ENCODE measurements at regions of chr7 and their contacts with region 1.

Region 1: DNA sequence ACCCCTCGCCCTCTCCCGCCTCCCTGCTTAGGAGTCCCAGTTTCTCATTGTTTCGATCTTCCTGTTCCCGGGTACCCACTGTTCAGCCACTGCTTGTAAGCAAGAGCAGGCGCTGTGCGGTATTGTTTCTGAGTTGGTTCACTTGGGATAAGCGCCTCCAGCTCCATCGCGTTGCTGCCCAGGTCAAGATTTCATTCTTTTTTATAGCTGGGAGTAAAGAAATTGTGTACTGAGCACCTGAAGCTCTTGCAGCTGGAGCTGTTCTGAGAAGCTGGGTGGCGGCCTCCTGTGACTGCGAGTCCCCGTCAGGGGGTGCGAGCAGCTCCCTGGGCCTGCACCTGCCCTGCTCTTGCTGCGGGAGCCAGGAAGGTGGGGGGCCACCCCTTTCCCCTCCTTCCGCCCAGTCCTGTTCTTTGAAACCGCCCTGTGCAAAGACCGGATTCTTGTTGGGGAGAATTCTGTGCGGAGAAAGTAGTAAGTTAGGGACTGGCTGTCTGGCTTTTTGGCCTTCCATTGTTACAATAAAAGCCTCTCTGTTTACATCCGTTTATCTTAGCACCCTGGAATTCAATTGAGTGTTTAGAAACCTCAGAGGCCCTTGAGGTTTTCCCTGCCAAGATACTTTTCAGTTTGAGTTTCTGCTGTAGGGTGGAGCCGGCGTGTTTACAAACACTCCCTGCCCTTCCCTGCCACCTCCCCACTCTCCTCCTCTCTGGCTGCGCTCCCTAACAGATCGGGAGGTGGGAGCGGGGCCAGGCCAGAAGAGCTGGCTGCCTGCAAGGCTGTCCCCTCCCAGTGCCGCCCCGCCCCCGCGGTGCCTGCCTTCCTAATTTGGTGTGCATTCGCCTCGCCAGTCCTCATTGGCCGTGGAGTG is 30.8 kb upstream of the AP5Z1 start:
- DNase-seq: peak; percentile 99
- H3K4me3 Mint-ChIP-seq: peak overlapping the region; percentile 73
- H3K27ac Mint-ChIP-seq: peak overlapping the region; percentile 97
- H3K4me1 Mint-ChIP-seq: peaks cover 4% of the 10 kb centered on the region
- H3K27me3 Mint-ChIP-seq: no peaks in the 10 kb centered on the region
- CTCF ChIP-seq: no peak

Region 2: DNA sequence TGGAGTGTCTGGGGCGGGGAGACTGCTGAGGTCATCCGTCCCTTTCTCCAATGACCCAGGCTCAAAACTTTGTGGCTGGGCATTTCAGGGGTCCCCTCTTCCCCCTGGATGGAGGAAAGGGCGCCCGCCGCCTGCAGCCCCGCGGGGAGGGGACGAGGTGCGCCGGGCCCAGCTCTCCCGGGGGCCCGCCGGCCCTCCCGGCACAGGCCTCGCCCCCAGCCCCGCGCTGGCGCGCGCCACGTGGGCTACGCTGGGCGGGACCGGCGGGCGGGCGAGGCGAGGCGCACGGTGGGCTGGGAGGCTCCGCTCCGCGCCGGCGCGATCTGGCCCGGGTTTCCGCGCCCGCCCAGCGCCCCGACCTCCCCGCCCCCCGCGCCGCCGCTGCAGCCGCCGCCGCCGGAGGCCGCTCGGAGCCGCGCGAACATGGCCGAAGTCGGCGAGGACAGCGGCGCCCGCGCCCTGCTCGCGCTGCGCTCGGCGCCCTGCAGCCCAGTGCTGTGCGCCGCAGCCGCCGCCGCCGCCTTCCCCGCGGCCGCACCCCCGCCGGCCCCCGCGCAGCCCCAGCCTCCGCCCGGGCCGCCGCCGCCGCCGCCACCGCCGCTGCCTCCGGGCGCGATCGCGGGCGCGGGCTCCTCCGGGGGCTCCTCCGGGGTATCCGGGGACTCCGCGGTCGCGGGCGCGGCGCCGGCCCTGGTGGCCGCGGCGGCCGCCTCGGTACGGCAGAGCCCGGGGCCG is 62.6 kb before region 1 on chr7 and contains the start of gene FOXK1:
- CTCF ChIA-PET with region 1: no interaction called
- POLR2A ChIA-PET with region 1: interaction called, 46 read pairs
- intact Hi-C with region 1: loop called (anchors 2 kb)
- DNase-seq: peak; percentile 64
- H3K4me3 Mint-ChIP-seq: peak within 1 kb of the TSS; percentile 83
- H3K27ac Mint-ChIP-seq: peak within 1 kb of the TSS; percentile 96
- H3K4me1 Mint-ChIP-seq: peaks cover 19% of the 10 kb centered on the region
- H3K27me3 Mint-ChIP-seq: no peaks in the 10 kb centered on the region
- CTCF ChIP-seq: no peak
- total RNA-seq, gene FOXK1: 37.7 and 43.8 TPM in 2 replicates

Region 3: GRCh38 chr7:4715410-4715776 is 29.2 kb before region 1 on chr7:
- CTCF ChIA-PET with region 1: no interaction called
- POLR2A ChIA-PET with region 1: interaction called, 13 read pairs
- intact Hi-C with region 1: loop called (anchors 2 kb)
- DNase-seq: peak; percentile 96
- H3K4me3 Mint-ChIP-seq: peak overlapping the region; percentile 56
- H3K27ac Mint-ChIP-seq: peak overlapping the region; percentile 20
- H3K4me1 Mint-ChIP-seq: peaks cover 20% of the 10 kb centered on the region
- H3K27me3 Mint-ChIP-seq: no peaks in the 10 kb centered on the region
- CTCF ChIP-seq: no peak

Region 4: GRCh38 chr7:4725014-4725849 is 19.4 kb before region 1 on chr7:
- CTCF ChIA-PET with region 1: interaction called, 5 read pairs
- POLR2A ChIA-PET with region 1: interaction called, 25 read pairs
- intact Hi-C with region 1: no loop called
- DNase-seq: peak; percentile 84
- H3K4me3 Mint-ChIP-seq: peak overlapping the region; percentile 87
- H3K27ac Mint-ChIP-seq: peak overlapping the region; percentile 95
- H3K4me1 Mint-ChIP-seq: peaks cover 21% of the 10 kb centered on the region
- H3K27me3 Mint-ChIP-seq: no peaks in the 10 kb centered on the region
- CTCF ChIP-seq: no peak

Region 5: GRCh38 chr7:4809091-4809591 is 64.5 kb after region 1 on chr7:
- CTCF ChIA-PET with region 1: no interaction called
- POLR2A ChIA-PET with region 1: no interaction called
- intact Hi-C with region 1: no loop called
- DNase-seq: no peak
- H3K4me3 Mint-ChIP-seq: no peak overlapping the region
- H3K27ac Mint-ChIP-seq: no peak overlapping the region
- H3K4me1 Mint-ChIP-seq: no peaks in the 10 kb centered on the region
- H3K27me3 Mint-ChIP-seq: peaks cover 27% of the 10 kb centered on the region
- CTCF ChIP-seq: no peak